ENCODE measurements at regions of chr10 and their contacts with region 1.

Region 1: GRCh38 chr10:30591249-30591670 is 38.3 kb downstream of the LYZL2 start:
- DNase-seq: peak; percentile 44
- H3K4me3 Mint-ChIP-seq: no peak overlapping the region
- H3K27ac Mint-ChIP-seq: no peak overlapping the region
- H3K4me1 Mint-ChIP-seq: no peaks in the 10 kb centered on the region
- H3K27me3 Mint-ChIP-seq: peaks cover 5% of the 10 kb centered on the region

Region 2: GRCh38 chr10:30348378-30348776 is 242.9 kb before region 1 on chr10:
- CTCF ChIA-PET with region 1: interaction called, 11 read pairs
- POLR2A ChIA-PET with region 1: no interaction called
- intact Hi-C with region 1: no loop called
- DNase-seq: no peak
- H3K4me3 Mint-ChIP-seq: peak overlapping the region; percentile 99
- H3K27ac Mint-ChIP-seq: peak overlapping the region; percentile 93
- H3K4me1 Mint-ChIP-seq: peaks cover 40% of the 10 kb centered on the region
- H3K27me3 Mint-ChIP-seq: no peaks in the 10 kb centered on the region

Region 3: DNA sequence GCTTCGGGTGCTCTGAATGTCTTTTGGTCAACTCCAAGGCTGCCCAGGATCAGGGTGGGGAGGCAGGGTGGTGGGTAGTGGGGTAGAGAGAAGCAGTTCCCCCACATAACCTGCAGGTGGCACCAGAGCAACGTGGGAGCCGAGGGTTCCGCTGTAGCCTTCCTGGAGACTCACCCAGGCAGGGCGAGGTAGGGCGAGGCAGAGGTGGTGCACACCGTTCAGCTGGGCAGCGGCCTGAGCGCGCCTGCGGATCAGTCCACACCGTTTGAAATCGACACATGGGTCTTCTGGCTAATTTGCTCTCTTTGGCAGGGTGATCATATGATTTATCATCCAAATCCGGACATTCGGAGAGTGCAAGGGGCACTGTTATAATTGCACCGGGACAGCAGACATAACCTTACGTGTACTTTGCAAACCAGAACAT is 198.7 kb before region 1 on chr10:
- CTCF ChIA-PET with region 1: interaction called, 99 read pairs
- POLR2A ChIA-PET with region 1: interaction called, 3 read pairs
- intact Hi-C with region 1: loop called (anchors 1 kb)
- DNase-seq: peak; percentile 84
- H3K4me3 Mint-ChIP-seq: peak overlapping the region; percentile 24
- H3K27ac Mint-ChIP-seq: no peak overlapping the region
- H3K4me1 Mint-ChIP-seq: peaks cover 2% of the 10 kb centered on the region
- H3K27me3 Mint-ChIP-seq: peaks cover 18% of the 10 kb centered on the region

Region 4: DNA sequence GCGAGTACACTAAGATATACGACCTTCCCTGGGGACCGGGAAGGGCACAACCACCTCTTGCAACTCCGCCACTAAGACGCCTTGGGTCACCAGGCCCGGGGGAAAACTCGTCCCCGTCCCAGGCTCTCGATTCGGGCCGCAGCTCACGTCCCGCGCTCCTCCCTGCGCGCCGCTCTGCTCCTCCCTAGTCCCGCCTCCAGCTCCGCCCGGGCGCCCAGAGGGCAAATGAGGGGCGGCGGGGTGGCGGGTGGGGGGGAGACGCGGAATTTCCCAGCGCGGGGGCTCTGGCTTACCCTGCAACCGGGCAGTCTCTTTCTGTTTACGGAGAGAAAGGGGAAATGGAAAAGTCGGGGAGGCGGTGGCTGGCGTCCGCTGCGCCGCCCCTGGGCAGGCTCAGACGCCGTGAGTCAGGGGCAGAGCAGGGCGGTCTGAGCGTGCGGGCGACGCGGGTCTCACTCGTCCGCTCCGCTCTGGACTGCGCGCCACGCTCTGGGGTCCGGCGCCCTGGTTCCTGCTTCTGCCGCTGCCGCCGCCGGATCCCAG is 157.5 kb before region 1 on chr10 and contains the start of gene MAP3K8:
- CTCF ChIA-PET with region 1: interaction called, 12 read pairs
- POLR2A ChIA-PET with region 1: no interaction called
- intact Hi-C with region 1: no loop called
- DNase-seq: peak; percentile 93
- H3K4me3 Mint-ChIP-seq: peak within 1 kb of the TSS; percentile 92
- H3K27ac Mint-ChIP-seq: peak within 1 kb of the TSS; percentile 95
- H3K4me1 Mint-ChIP-seq: peaks cover 49% of the 10 kb centered on the region
- H3K27me3 Mint-ChIP-seq: no peaks in the 10 kb centered on the region
- total RNA-seq, gene MAP3K8: 36.5 to 40.6 TPM

Region 5: DNA sequence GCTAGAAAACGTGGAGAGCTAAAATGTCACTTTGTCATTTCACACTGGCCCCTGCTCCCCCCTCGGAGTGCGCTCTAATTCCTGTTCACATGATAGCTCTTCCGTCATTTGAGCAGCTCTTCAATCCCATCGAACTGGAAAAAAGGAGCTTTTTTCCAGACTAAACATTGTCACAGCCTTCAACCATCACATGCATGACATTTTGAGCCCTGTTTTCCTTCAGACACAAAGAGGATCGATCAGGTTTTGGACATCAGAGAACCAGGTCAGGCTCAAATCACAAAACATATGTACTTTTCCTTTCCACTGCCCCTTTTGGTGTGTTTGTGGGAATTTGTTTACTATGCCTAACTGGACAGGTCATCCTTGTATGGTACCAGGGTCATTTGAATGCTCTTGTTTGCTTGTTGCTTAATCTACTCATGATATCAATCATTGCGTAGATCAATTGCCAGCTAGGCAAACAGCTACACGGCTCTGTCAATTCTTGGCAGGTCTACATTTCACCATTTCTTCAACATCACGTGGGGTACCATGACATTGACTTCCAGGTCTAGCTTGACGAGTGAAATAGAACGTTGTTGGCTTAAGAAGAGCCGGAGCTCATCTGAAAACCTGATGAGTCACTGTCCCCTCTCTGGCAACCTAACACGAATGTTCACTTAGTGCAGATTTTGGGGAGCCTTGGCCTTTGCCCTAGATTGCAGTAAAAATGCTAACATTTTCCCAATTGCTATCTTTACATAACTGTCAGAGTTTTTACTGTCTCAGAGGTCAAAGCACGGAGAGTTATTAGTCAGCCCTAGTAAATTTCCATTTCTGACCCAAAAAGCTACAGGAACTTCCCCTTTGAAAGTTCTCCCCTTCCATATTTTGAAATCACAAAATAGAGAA is 49.0 kb before region 1 on chr10:
- CTCF ChIA-PET with region 1: interaction called, 13 read pairs
- POLR2A ChIA-PET with region 1: no interaction called
- intact Hi-C with region 1: no loop called
- DNase-seq: no peak
- H3K4me3 Mint-ChIP-seq: no peak overlapping the region
- H3K27ac Mint-ChIP-seq: no peak overlapping the region
- H3K4me1 Mint-ChIP-seq: peaks cover 14% of the 10 kb centered on the region
- H3K27me3 Mint-ChIP-seq: peaks cover 2% of the 10 kb centered on the region

Region 6: GRCh38 chr10:30606313-30606712 is 15.1 kb after region 1 on chr10:
- CTCF ChIA-PET with region 1: interaction called, 20 read pairs
- POLR2A ChIA-PET with region 1: no interaction called
- intact Hi-C with region 1: no loop called
- DNase-seq: no peak
- H3K4me3 Mint-ChIP-seq: no peak overlapping the region
- H3K27ac Mint-ChIP-seq: no peak overlapping the region
- H3K4me1 Mint-ChIP-seq: peaks cover 3% of the 10 kb centered on the region
- H3K27me3 Mint-ChIP-seq: peaks cover 30% of the 10 kb centered on the region

Region 7: DNA sequence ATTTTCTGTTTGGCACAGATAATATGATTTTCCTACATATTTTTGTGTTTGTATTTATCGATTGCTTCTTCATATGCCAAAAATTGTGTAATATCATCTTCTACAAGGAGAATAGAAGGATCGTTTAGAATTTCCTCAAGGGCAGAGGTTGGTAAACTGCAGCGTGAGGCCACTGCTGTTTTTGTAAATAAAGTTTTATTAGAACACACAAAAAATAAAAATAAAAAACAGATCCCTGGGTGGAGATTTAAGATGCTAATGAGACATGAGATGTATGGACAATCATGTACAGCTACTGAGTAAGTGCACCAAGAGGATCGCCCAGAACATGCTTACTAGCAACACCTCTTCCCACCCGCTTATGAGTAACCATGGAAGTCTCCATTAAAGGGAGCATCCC is 28.7 kb after region 1 on chr10:
- CTCF ChIA-PET with region 1: no interaction called
- POLR2A ChIA-PET with region 1: no interaction called
- intact Hi-C with region 1: no loop called
- DNase-seq: no peak
- H3K4me3 Mint-ChIP-seq: no peak overlapping the region
- H3K27ac Mint-ChIP-seq: no peak overlapping the region
- H3K4me1 Mint-ChIP-seq: peaks cover 5% of the 10 kb centered on the region
- H3K27me3 Mint-ChIP-seq: peaks cover 6% of the 10 kb centered on the region

Measured in activated CD4-positive, alpha-beta memory T cell treated with anti-CD3 and anti-CD28 coated beads for 36 hours (primary cell).